ENCODE measurements at regions of chr12 and their contacts with region 1.

Region 1: GRCh38 chr12:116009805-116010204 is 267.7 kb downstream of the MED13L start:
- DNase-seq: no peak
- ATAC-seq: peak in 1 of 4 donors; percentile 21
- H3K4me3 ChIP-seq: no peak overlapping the region
- H3K27ac ChIP-seq: no peak overlapping the region
- H3K4me1 ChIP-seq: no peaks in the 10 kb centered on the region
- H3K27me3 ChIP-seq: no peaks in the 10 kb centered on the region
- CTCF ChIP-seq: no peak

Region 2: GRCh38 chr12:115691123-115691522 is 318.7 kb before region 1 on chr12:
- intact Hi-C with region 1: no loop called
- DNase-seq: no peak
- ATAC-seq: no peak
- H3K4me3 ChIP-seq: no peak overlapping the region
- H3K27ac ChIP-seq: no peak overlapping the region
- H3K4me1 ChIP-seq: no peaks in the 10 kb centered on the region
- H3K27me3 ChIP-seq: no peaks in the 10 kb centered on the region
- CTCF ChIP-seq: no peak

Region 3: GRCh38 chr12:116599285-116600136 is 589.7 kb after region 1 on chr12:
- intact Hi-C with region 1: loop called in 1 of 3 experiments (anchors 10 kb)
- DNase-seq: peak; percentile 65 to 93 (median 84)
- ATAC-seq: peak; percentile 90 to 95 (median 94)
- H3K4me3 ChIP-seq: peak overlapping the region in 2 of 4 donors; percentile 31 to 35
- H3K27ac ChIP-seq: peak overlapping the region; percentile 14 to 74 (median 48)
- H3K4me1 ChIP-seq: peaks cover 8 to 9% (median 8%) of the 10 kb centered on the region in 3 donors
- H3K27me3 ChIP-seq: no peaks in the 10 kb centered on the region
- CTCF ChIP-seq: peak in 3 of 4 donors; percentile 26 to 58 (median 54)

Region 4: GRCh38 chr12:116703214-116703795 is 693.5 kb after region 1 on chr12:
- intact Hi-C with region 1: loop called in 1 of 3 experiments (anchors 10 kb)
- DNase-seq: peak; percentile 41 to 77 (median 68)
- ATAC-seq: peak in 3 of 4 donors; percentile 87 to 91 (median 88)
- H3K4me3 ChIP-seq: no peak overlapping the region
- H3K27ac ChIP-seq: no peak overlapping the region
- H3K4me1 ChIP-seq: peaks cover 6 to 12% (median 11%) of the 10 kb centered on the region in 3 donors
- H3K27me3 ChIP-seq: no peaks in the 10 kb centered on the region
- CTCF ChIP-seq: peak; percentile 76 to 89 (median 82)

Measured in pancreas (tissue), 10 donors.